Gastrocnemius medialis (tissue), 4 donors: ENCODE measurements at regions of chr12 and their contacts with region 1.

Region 1: GRCh38 chr12:949453-950191 is at the start of gene RAD52:
- DNase-seq: peak; percentile 96 to 98
- ATAC-seq: peak; percentile 92 to 94
- H3K4me3 ChIP-seq: peak within 1 kb of the TSS; percentile 78 to 94 (median 92)
- H3K27ac ChIP-seq: peak within 1 kb of the TSS; percentile 91 to 97 (median 94)
- H3K4me1 ChIP-seq: peaks cover 16 to 25% of the 10 kb centered on the region in 2 donors
- H3K27me3 ChIP-seq: no peaks in the 10 kb centered on the region
- CTCF ChIP-seq: peak; percentile 96 to 100 (median 99)
- POLR2A ChIP-seq: peak; percentile 81 to 88
- total RNA-seq, gene RAD52: 11.3 to 21.0 (median 14.3) TPM

Region 2: GRCh38 chr12:510071-510825 is 439.4 kb before region 1 on chr12:
- in situ Hi-C with region 1: no loop called
- intact Hi-C with region 1: no loop called
- DNase-seq: no peak
- ATAC-seq: no peak
- H3K4me3 ChIP-seq: no peak overlapping the region
- H3K27ac ChIP-seq: no peak overlapping the region
- H3K4me1 ChIP-seq: no peaks in the 10 kb centered on the region
- H3K27me3 ChIP-seq: peaks cover 0 to 4% (median 0%) of the 10 kb centered on the region in 3 donors
- CTCF ChIP-seq: no peak
- POLR2A ChIP-seq: no peak

Region 3: GRCh38 chr12:563250-563781 is 386.3 kb before region 1 on chr12:
- in situ Hi-C with region 1: loop called (anchors 5 to 25 kb)
- intact Hi-C with region 1: no loop called
- DNase-seq: no peak
- ATAC-seq: no peak
- H3K4me3 ChIP-seq: no peak overlapping the region
- H3K27ac ChIP-seq: no peak overlapping the region
- H3K4me1 ChIP-seq: no peaks in the 10 kb centered on the region
- H3K27me3 ChIP-seq: no peaks in the 10 kb centered on the region
- CTCF ChIP-seq: no peak
- POLR2A ChIP-seq: no peak

Region 4: GRCh38 chr12:774051-774614 is 175.5 kb before region 1 on chr12:
- in situ Hi-C with region 1: no loop called
- intact Hi-C with region 1: no loop called
- DNase-seq: no peak
- ATAC-seq: peak in 1 of 2 donors; percentile 74
- H3K4me3 ChIP-seq: peak overlapping the region in 2 of 4 donors; percentile 4 to 14
- H3K27ac ChIP-seq: peak overlapping the region; percentile 39 to 78 (median 56)
- H3K4me1 ChIP-seq: peaks cover 73 to 81% of the 10 kb centered on the region in 2 donors
- H3K27me3 ChIP-seq: no peaks in the 10 kb centered on the region
- CTCF ChIP-seq: no peak
- POLR2A ChIP-seq: no peak

Region 5: DNA sequence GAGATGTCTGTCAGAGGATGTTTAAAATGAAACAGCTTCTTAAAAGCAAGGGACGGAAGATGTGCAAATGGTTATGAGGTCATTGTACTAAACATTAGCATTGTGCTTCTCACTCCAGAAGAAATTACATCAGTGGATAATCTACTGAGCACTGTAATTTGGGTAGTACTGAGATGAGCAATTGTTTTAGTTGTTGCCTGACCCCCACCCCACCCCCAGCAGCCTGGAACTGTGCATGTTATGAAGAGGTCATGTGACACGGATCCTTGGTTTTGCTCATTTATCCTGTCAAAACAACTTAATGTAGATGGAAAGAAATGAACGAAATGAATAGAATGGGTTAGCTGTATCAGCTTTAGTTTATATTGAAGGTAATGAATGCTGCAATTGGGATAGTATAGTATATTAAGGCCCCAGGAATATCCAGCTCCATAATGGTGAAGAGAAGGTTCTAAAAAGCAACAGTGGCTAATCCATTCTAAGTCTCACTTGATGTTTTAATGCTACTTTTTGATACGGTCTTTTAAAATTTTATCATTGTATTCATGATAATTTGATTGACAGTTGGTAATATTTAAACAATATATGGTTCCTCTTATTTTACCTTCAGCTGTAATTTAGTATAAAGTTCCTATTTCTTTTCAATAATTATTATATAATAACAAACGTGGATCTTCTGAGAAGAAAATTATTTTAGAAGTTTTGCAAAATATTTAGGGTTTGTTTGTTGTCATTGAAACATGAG is 138.8 kb before region 1 on chr12:
- in situ Hi-C with region 1: loop called in 3 of 4 experiments (anchors 5 to 10 kb)
- intact Hi-C with region 1: loop called (anchors 1 kb)
- DNase-seq: no peak
- ATAC-seq: no peak
- H3K4me3 ChIP-seq: no peak overlapping the region
- H3K27ac ChIP-seq: peak overlapping the region in 3 of 4 donors; percentile 31 to 81 (median 44)
- H3K4me1 ChIP-seq: peaks cover 46 to 54% of the 10 kb centered on the region in 2 donors
- H3K27me3 ChIP-seq: no peaks in the 10 kb centered on the region
- CTCF ChIP-seq: no peak
- POLR2A ChIP-seq: no peak

Region 6: GRCh38 chr12:977156-977555 is 27.5 kb after region 1 on chr12:
- in situ Hi-C with region 1: no loop called
- intact Hi-C with region 1: no loop called
- DNase-seq: no peak
- ATAC-seq: no peak
- H3K4me3 ChIP-seq: no peak overlapping the region
- H3K27ac ChIP-seq: no peak overlapping the region
- H3K4me1 ChIP-seq: no peaks in the 10 kb centered on the region
- H3K27me3 ChIP-seq: no peaks in the 10 kb centered on the region
- CTCF ChIP-seq: no peak
- POLR2A ChIP-seq: no peak

Region 7: GRCh38 chr12:990661-991349 is 41.2 kb after region 1 on chr12 and contains the start of gene ERC1:
- in situ Hi-C with region 1: no loop called
- intact Hi-C with region 1: loop called (anchors 2 kb)
- DNase-seq: peak; percentile 86 to 88
- ATAC-seq: peak; percentile 83 to 87
- H3K4me3 ChIP-seq: peak within 1 kb of the TSS; percentile 76 to 96 (median 90)
- H3K27ac ChIP-seq: peak within 1 kb of the TSS; percentile 97 to 100 (median 99)
- H3K4me1 ChIP-seq: peaks cover 30 to 35% of the 10 kb centered on the region in 2 donors
- H3K27me3 ChIP-seq: no peaks in the 10 kb centered on the region
- CTCF ChIP-seq: peak in 2 of 5 experiments; percentile 13 to 25
- POLR2A ChIP-seq: peak; percentile 77 to 92
- total RNA-seq, gene ERC1: 20.3 to 39.1 (median 23.5) TPM

Region 8: GRCh38 chr12:1339618-1340319 is 390.1 kb after region 1 on chr12:
- in situ Hi-C with region 1: no loop called
- intact Hi-C with region 1: no loop called
- DNase-seq: no peak
- ATAC-seq: peak in 1 of 2 donors; percentile 30
- H3K4me3 ChIP-seq: no peak overlapping the region
- H3K27ac ChIP-seq: no peak overlapping the region
- H3K4me1 ChIP-seq: no peaks in the 10 kb centered on the region
- H3K27me3 ChIP-seq: no peaks in the 10 kb centered on the region
- CTCF ChIP-seq: no peak
- POLR2A ChIP-seq: no peak

Region 9: DNA sequence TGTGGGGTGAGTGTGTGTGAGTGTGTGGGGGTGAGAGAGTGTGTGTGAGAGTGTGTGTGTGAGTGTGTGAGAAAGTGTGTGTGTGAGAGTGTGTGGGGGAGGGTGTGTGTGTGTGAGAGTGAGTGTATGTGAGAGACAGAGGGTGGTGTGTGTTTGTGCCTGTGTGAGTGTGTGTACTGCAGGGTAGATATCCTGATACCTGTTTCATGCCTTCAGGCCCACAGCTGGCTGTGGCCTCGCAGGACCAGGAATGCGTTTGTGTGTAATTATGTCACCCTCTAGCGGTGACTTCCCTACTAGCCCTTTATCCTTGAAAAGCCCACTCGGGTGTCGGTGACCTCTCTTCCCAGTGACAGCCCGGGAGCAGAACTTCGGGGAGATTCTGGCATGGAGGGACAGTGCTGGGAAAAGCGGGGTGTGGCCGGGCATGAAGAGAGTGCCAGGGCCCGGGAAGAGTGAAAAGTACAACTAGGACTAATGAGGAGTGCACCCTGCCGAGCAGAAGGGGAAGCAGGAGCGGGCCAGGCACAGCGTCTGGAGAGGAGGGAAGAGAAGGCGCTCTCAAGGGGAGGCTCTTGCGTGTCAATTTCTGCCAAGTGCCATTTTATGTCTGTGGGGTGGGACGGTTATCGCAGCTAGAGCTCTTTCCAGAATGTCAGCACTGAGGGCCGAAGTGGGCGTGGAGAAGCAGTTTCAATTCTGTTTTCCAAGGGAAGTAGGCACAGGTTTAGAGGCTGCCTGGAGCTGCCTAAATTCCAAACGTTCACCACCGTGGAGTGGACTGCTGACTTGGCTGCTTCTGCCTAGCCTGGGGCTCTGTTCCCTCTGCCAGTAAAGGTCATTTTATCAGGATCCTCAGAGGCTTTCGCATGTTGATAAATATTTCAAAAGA is 655.8 kb after region 1 on chr12:
- in situ Hi-C with region 1: no loop called
- intact Hi-C with region 1: loop called (anchors 10 kb)
- DNase-seq: peak; percentile 47 to 59
- ATAC-seq: peak; percentile 80 to 87
- H3K4me3 ChIP-seq: peak overlapping the region; percentile 48 to 69 (median 62)
- H3K27ac ChIP-seq: peak overlapping the region; percentile 75 to 84 (median 80)
- H3K4me1 ChIP-seq: peaks cover 8 to 15% of the 10 kb centered on the region in 2 donors
- H3K27me3 ChIP-seq: no peaks in the 10 kb centered on the region
- CTCF ChIP-seq: peak; percentile 72 to 85 (median 77)
- POLR2A ChIP-seq: no peak